ENCODE measurements at regions of chr4 and their contacts with region 1.

Region 1: DNA sequence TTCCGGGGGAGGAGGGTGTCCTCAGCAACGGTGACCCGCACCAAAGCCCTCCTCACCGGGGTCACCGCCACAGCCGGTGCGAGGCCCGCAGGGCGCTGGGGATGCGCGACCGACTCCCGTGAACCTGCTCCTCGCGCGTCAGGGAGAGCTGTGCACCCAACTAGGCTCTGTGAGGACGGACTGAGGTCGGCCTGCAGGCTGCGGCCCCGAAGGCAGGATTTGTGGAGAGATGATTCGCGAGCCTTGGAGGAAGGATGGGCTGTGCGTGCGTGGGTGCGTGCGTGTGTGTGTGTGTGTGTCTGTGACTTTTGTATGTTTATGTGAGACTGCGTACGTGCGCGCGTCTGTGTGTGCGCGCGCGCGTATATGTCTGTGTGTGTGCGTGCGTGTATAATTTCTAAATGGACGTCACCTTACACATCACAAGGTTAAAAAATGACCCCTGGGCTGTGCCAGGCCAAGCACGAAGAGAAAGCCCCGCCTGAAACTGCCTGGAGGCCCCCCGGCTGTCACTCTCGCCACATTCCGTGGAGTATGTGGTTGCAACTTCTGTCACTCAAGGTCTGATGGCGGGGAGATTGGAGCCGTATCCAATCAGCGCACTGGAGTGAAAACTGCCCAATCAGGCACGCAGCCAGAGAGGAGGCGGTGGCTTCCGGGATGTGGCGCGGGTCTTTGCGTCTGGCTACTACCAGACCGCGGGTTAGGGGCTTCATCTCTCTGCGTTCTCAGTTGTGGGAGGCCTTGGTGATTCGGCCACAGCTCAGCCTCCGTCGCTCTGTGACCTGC is at the start of gene ZNF141:
- DNase-seq: peak; percentile 96
- H3K4me3 Mint-ChIP-seq: peak within 1 kb of the TSS; percentile 99
- H3K27ac Mint-ChIP-seq: peak within 1 kb of the TSS; percentile 99
- H3K4me1 Mint-ChIP-seq: peaks cover 22% of the 10 kb centered on the region
- H3K27me3 Mint-ChIP-seq: no peaks in the 10 kb centered on the region
- total RNA-seq, gene ZNF141: 21.2 to 23.2 TPM

Region 2: DNA sequence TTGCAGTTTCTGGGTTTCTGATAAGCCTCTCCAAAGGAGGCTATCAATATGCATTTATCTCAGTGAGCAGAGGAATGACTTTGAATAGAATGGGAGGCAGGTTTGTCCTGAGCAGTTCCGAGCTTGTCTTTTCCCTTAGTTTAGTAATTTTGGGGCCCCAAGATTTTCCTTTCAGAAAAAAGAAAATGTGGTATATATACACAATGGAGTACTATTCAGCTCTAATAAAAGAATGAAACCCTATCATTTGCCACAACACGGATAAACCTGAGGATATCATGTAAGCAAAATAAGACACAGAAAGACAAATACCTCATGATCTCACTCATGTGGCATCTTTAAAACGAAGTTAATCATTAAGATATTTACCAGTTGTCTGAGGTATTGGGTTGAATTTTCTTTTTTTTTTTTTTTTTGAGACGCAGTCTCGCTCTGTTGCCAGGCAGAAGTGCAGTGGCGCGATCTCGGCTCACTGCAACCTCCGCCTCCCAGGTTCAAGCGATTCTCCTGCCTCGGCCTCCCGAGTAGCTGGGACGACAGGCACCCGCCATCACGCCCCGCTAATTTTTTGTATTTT is 161.1 kb after region 1 on chr4:
- CTCF ChIA-PET with region 1: no interaction called
- intact Hi-C with region 1: loop called (anchors 1 kb)
- DNase-seq: no peak
- H3K4me3 Mint-ChIP-seq: peak overlapping the region; percentile 94
- H3K27ac Mint-ChIP-seq: peak overlapping the region; percentile 90
- H3K4me1 Mint-ChIP-seq: peaks cover 40% of the 10 kb centered on the region
- H3K27me3 Mint-ChIP-seq: no peaks in the 10 kb centered on the region

Region 3: GRCh38 chr4:762211-763190 is 425.2 kb after region 1 on chr4:
- CTCF ChIA-PET with region 1: no interaction called
- intact Hi-C with region 1: no loop called
- DNase-seq: no peak
- H3K4me3 Mint-ChIP-seq: no peak overlapping the region
- H3K27ac Mint-ChIP-seq: peak overlapping the region; percentile 10
- H3K4me1 Mint-ChIP-seq: peaks cover 4% of the 10 kb centered on the region
- H3K27me3 Mint-ChIP-seq: no peaks in the 10 kb centered on the region

Measured in activated naive CD4-positive, alpha-beta T cell treated with anti-CD3 and anti-CD28 coated beads for 36 hours (primary cell).